Activated T-helper 2 cell treated with anti-CD3 and anti-CD28 coated beads, Interferon-gamma antibody, Interleukin-2, Interleukin-4, amounts not matched to agents 10 μg/mL and 5 μg/mL and 100 μg/mL, durations not matched to agents 14 hours and 24 hours and 36 hours (primary cell): ENCODE measurements at regions of chr20 and their contacts with region 1.

Region 1: GRCh38 chr20:13341781-13342277 is 120.8 kb downstream of the ISM1 start:
- DNase-seq: no peak
- H3K4me3 Mint-ChIP-seq: no peak overlapping the region
- H3K27ac Mint-ChIP-seq: peak overlapping the region; percentile 36
- H3K4me1 Mint-ChIP-seq: peaks cover 42% of the 10 kb centered on the region
- H3K27me3 Mint-ChIP-seq: no peaks in the 10 kb centered on the region

Region 2: DNA sequence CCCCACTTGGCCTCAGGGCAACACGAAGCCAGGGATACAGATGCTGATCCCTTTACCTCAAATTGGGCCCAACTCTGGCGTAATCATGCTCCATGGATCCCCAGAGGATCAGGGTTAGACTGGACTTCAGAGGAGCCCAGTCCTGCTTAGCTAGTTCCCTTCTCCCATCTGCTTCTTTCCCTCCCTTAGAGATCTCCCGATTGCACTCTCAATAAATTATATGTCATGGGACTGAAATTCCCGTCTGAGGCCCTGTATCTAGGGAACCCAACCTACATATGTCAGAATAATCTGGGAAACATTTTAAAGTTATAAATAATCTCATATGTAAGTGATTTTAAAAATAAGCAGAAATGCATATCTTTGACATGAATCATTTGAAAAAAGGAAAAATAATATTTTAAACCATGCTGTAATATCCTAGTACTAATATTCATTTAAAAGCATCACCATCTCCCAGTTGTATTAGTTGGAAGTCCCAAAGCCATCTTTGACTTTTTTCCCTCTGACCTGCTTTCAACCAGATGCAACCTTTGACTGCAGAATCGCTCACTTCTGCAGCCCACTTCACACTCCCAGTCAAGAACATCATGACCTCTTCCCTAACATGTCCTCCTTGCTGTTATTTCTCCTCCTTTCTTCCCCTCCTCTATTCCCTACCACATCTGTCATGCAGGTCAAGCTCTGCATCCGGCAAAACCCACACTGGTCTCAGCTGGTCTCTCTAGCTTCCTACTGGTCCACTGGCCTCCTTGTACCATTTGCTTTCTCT is 1030.5 kb before region 1 on chr20:
- intact Hi-C with region 1: no loop called
- DNase-seq: no peak
- H3K4me3 Mint-ChIP-seq: no peak overlapping the region
- H3K27ac Mint-ChIP-seq: no peak overlapping the region
- H3K4me1 Mint-ChIP-seq: no peaks in the 10 kb centered on the region
- H3K27me3 Mint-ChIP-seq: no peaks in the 10 kb centered on the region

Region 3: DNA sequence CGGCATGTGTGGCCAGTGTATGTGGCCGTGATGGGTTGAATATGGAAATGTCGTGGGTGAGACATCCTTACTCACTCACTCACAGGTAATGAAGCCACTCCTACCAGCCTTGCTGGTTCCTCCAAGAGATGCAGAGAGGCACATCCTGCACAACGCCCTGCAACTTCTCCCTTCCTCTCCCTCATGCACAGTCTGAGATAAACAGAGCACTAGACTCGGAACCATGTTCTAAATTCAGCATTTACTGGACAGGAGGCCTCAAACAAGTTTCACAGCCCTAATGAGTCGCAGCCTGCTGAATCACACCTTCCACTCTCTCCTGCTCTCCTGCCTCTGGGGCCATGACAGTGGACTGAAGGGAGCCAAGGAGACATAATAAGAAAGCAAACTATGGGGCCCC is 29.5 kb before region 1 on chr20:
- intact Hi-C with region 1: loop called (anchors 2 kb)
- DNase-seq: no peak
- H3K4me3 Mint-ChIP-seq: no peak overlapping the region
- H3K27ac Mint-ChIP-seq: peak overlapping the region; percentile 23
- H3K4me1 Mint-ChIP-seq: peaks cover 20% of the 10 kb centered on the region
- H3K27me3 Mint-ChIP-seq: peaks cover 2% of the 10 kb centered on the region

Region 4: GRCh38 chr20:13325033-13325432 is 16.8 kb before region 1 on chr20:
- intact Hi-C with region 1: no loop called
- DNase-seq: no peak
- H3K4me3 Mint-ChIP-seq: no peak overlapping the region
- H3K27ac Mint-ChIP-seq: peak overlapping the region; percentile 18
- H3K4me1 Mint-ChIP-seq: peaks cover 26% of the 10 kb centered on the region
- H3K27me3 Mint-ChIP-seq: peaks cover 1% of the 10 kb centered on the region

Region 5: GRCh38 chr20:13401596-13401995 is 59.8 kb after region 1 on chr20:
- intact Hi-C with region 1: no loop called
- DNase-seq: no peak
- H3K4me3 Mint-ChIP-seq: no peak overlapping the region
- H3K27ac Mint-ChIP-seq: no peak overlapping the region
- H3K4me1 Mint-ChIP-seq: peaks cover 8% of the 10 kb centered on the region
- H3K27me3 Mint-ChIP-seq: no peaks in the 10 kb centered on the region

Region 6: GRCh38 chr20:13422637-13423036 is 80.8 kb after region 1 on chr20:
- intact Hi-C with region 1: no loop called
- DNase-seq: no peak
- H3K4me3 Mint-ChIP-seq: no peak overlapping the region
- H3K27ac Mint-ChIP-seq: no peak overlapping the region
- H3K4me1 Mint-ChIP-seq: peaks cover 6% of the 10 kb centered on the region
- H3K27me3 Mint-ChIP-seq: no peaks in the 10 kb centered on the region